CD14-positive monocyte (primary cell): ENCODE measurements at regions of chr12 and their contacts with region 1.

Region 1: DNA sequence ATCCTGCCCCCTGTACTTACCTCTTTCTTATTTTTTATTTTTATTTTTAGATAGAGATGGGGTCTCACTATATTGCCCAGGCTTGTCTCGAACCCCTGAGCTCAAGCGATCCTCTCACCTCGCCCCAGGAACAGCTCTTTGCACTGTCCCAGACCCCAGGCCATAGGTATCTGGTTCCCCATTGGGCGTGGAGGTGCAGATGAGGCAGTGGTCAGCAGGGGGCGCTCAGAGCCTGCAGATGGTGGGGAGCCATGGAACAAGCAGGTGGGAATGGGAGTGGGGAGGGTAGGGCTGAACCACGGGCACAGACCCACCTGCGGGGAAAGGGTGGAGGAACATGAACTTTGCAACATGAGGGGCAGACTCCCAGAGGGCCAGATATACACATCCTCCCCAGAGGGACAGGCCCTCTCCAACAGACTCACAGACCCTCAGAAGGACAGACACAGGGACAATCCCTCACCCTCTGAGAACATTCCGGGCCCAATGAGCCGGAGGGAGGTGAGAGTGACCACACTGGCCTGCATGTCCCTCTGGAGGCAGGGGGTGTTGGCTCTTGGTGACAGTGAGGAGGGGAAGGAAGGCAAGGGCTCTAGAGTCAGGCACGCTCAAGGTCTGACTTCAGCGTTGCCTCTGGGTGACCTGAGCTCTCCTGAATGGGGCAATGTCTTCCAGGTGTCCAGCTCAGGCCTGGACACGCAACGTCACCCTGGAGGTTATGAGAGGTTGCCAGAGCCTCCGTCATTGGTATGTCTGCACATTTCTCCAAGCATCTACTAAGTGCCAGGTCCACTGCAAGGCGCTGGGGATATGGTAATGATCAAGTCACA is 34.9 kb downstream of the KRT80 start:
- DNase-seq: peak; percentile 60 to 74 (median 65)
- H3K4me3 ChIP-seq: no peak overlapping the region
- H3K4me3 Mint-ChIP-seq: no peak overlapping the region
- H3K27ac ChIP-seq: no peak overlapping the region
- H3K27ac Mint-ChIP-seq: peak overlapping the region in 1 of 7 donors; percentile 24
- H3K4me1 ChIP-seq: peaks cover 3 to 8% of the 10 kb centered on the region in 2 donors
- H3K4me1 Mint-ChIP-seq: peaks cover 4% of the 10 kb centered on the region
- H3K27me3 ChIP-seq: peaks cover 0 to 9% of the 10 kb centered on the region in 2 donors
- H3K27me3 Mint-ChIP-seq: peaks cover 12 to 19% (median 13%) of the 10 kb centered on the region in 3 donors
- CTCF ChIP-seq: peak; percentile 97

Region 2: GRCh38 chr12:52139552-52140062 is 17.3 kb before region 1 on chr12:
- intact Hi-C with region 1: no loop called
- DNase-seq: no peak
- H3K4me3 ChIP-seq: no peak overlapping the region
- H3K4me3 Mint-ChIP-seq: peak overlapping the region in 1 of 2 donors; percentile 57
- H3K27ac ChIP-seq: no peak overlapping the region
- H3K27ac Mint-ChIP-seq: peak overlapping the region in 1 of 7 donors; percentile 5
- H3K4me1 ChIP-seq: no peaks in the 10 kb centered on the region
- H3K4me1 Mint-ChIP-seq: peaks cover 2% of the 10 kb centered on the region
- H3K27me3 ChIP-seq: peaks cover 0 to 9% of the 10 kb centered on the region in 2 donors
- H3K27me3 Mint-ChIP-seq: peaks cover 25 to 38% (median 28%) of the 10 kb centered on the region in 3 donors
- CTCF ChIP-seq: peak; percentile 55

Region 3: DNA sequence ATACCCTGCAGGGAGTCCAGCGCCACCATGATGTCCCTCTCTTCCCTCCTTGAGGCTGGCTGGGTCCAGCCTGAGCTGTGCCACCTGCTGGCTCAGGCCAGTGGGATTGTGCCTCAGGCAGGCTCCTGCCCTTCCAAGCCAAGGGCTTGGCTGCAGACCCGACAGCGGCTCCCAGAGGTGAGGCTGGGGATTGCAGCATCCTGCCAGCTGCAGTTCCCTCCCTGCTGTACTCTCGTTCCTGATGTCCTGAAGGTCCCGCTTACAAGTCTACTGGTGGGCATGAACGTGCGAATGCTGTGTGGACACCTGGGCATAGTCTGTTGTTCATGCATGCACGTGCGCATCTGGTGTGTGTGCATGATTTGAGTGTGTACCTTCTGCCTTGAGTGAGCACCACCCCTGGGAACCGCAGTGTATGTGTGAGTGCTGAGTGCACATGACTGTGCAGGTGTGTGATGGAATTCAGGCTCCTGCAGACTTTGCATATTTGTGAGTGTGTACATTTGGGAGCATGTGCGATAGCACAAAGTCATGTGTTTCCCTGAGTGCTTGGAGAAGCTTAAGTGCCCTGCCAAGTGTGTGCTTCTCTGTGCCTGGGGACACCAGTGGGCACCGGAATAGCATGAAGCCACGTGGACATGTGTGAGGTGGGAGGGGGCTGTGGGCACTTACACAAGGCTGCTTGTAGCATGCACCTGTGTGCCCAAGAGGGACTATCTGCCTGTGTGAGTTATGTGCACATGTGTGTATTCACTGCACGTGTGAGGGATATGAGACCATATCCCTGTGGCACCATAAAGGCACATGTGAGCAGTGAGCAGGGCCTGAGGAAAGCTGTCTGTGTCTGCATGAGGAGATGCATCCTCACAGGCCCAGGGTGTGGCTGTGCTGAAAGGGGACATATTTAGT is 56.8 kb after region 1 on chr12:
- intact Hi-C with region 1: loop called (anchors 2 kb)
- DNase-seq: peak; percentile 80 to 87 (median 82)
- H3K4me3 ChIP-seq: no peak overlapping the region
- H3K4me3 Mint-ChIP-seq: no peak overlapping the region
- H3K27ac ChIP-seq: no peak overlapping the region
- H3K27ac Mint-ChIP-seq: peak overlapping the region in 2 of 7 donors; percentile 50 to 77
- H3K4me1 ChIP-seq: peaks cover 22 to 41% of the 10 kb centered on the region in 2 donors
- H3K4me1 Mint-ChIP-seq: peaks cover 51% of the 10 kb centered on the region
- H3K27me3 ChIP-seq: no peaks in the 10 kb centered on the region
- H3K27me3 Mint-ChIP-seq: peaks cover under 1 to 2% (median 1%) of the 10 kb centered on the region in 3 donors
- CTCF ChIP-seq: peak; percentile 99

Region 4: DNA sequence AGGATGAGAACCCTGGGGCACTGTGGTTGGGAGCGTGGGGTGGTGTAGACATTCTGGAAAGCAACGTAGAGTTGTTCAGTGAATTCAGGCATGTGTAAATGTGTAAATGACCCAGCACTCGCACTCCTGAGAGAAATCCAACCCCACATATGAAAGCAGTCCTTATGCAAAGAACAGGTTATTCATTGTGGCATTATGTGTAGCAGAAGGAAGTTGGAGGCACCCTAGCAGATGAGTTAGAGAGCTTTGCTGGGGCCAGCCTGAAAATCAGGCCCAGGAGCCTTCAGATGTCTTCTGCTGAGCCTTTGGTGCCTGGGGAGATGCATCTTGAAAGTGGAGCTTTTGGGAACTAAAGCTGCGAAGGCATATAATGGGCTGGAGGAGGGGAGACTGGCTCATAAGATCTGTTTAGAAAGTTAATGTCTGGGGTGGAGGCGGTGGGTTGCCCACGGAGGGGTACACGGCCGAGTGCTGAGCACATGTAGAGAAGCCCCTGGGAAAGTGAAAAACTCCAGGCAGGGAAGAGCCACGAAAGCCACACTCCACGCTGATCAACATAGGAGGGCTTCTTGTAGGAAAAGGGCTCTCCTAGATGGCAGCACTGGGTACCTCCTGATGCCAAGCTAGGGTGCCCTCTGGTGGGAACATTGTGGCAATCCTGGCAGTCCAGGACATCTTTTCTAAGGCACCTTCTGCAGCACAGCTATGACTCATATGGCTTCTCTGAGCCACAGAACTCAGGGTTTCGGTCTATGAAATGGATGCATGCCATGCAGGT is 170.3 kb after region 1 on chr12:
- intact Hi-C with region 1: loop called (anchors 1 kb)
- DNase-seq: peak; percentile 81 to 90 (median 87)
- H3K4me3 ChIP-seq: no peak overlapping the region
- H3K4me3 Mint-ChIP-seq: no peak overlapping the region
- H3K27ac ChIP-seq: no peak overlapping the region
- H3K27ac Mint-ChIP-seq: no peak overlapping the region
- H3K4me1 ChIP-seq: no peaks in the 10 kb centered on the region
- H3K4me1 Mint-ChIP-seq: peaks cover 4% of the 10 kb centered on the region
- H3K27me3 ChIP-seq: peaks cover 0 to 11% of the 10 kb centered on the region in 2 donors
- H3K27me3 Mint-ChIP-seq: peaks cover 16 to 36% (median 22%) of the 10 kb centered on the region in 3 donors
- CTCF ChIP-seq: peak; percentile 88

Region 5: GRCh38 chr12:52879394-52880351 is 722.7 kb after region 1 on chr12:
- intact Hi-C with region 1: loop called (anchors 2 to 10 kb)
- DNase-seq: peak; percentile 65 to 78 (median 71)
- H3K4me3 ChIP-seq: peak overlapping the region; percentile 11 to 72 (median 30)
- H3K4me3 Mint-ChIP-seq: peak overlapping the region; percentile 73 to 90
- H3K27ac ChIP-seq: no peak overlapping the region
- H3K27ac Mint-ChIP-seq: peak overlapping the region in 2 of 7 donors; percentile 55 to 68
- H3K4me1 ChIP-seq: peaks cover 13 to 27% of the 10 kb centered on the region in 2 donors
- H3K4me1 Mint-ChIP-seq: peaks cover 23% of the 10 kb centered on the region
- H3K27me3 ChIP-seq: no peaks in the 10 kb centered on the region
- H3K27me3 Mint-ChIP-seq: peaks cover 2 to 15% (median 8%) of the 10 kb centered on the region in 3 donors
- CTCF ChIP-seq: peak; percentile 98